Naive thymus-derived CD4-positive, alpha-beta T cell (primary cell): ENCODE measurements at regions of chr7 and their contacts with region 1.

Region 1: GRCh38 chr7:131107337-131108211 is 220.1 kb upstream of the MKLN1 start:
- DNase-seq: peak; percentile 53 to 90 (median 84)
- ATAC-seq: peak; percentile 38
- H3K4me3 ChIP-seq: peak overlapping the region; percentile 98
- H3K4me3 Mint-ChIP-seq: peak overlapping the region; percentile 86 to 100 (median 97)
- H3K27ac ChIP-seq: peak overlapping the region; percentile 98
- H3K27ac Mint-ChIP-seq: peak overlapping the region; percentile 95 to 100 (median 98)
- H3K4me1 ChIP-seq: peaks cover 42 to 46% of the 10 kb centered on the region in 2 donors
- H3K4me1 Mint-ChIP-seq: peaks cover 48 to 69% (median 58%) of the 10 kb centered on the region in 7 donors
- H3K27me3 ChIP-seq: no peaks in the 10 kb centered on the region
- H3K27me3 Mint-ChIP-seq: peaks cover 0 to 5% (median 0%) of the 10 kb centered on the region in 5 donors

Region 2: DNA sequence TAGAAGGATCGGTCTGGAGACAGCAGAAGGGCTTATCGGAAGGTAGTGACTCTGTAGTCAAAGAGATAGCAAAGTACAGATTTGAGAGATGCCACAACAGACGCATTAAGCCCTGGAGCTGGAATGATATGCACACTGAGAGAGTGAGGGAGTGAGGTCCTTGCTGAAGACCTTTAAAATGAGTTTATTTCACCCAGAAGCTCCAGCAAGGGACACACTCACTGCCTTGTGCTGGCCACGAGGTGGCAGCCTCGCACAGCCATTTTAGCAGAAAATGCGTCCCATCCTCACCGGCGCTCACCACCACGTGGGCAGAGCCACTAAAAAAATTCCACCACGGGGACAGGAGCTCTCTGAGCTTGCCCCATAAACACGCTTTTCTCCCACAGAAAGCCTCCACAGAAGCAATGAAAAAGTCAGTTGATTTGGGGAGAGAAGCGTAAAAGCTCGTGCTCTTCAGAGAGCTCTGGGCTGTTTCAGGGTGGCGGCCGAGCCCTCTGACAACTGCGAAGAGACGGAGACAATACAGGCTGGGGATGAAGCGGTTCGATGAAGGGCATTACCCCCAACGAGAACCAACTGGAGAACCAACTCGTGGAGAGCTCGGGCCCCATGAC is 210.6 kb before region 1 on chr7:
- CTCF ChIA-PET with region 1: interaction called, 3 read pairs
- POLR2A ChIA-PET with region 1: no interaction called
- intact Hi-C with region 1: loop called in 1 of 2 experiments (anchors 2 kb)
- DNase-seq: peak; percentile 60 to 76 (median 69)
- ATAC-seq: peak; percentile 84
- H3K4me3 ChIP-seq: no peak overlapping the region
- H3K4me3 Mint-ChIP-seq: peak overlapping the region in 7 of 10 donors; percentile 16 to 67 (median 37)
- H3K27ac ChIP-seq: no peak overlapping the region
- H3K27ac Mint-ChIP-seq: peak overlapping the region; percentile 61 to 92 (median 84)
- H3K4me1 ChIP-seq: peaks cover 16 to 35% of the 10 kb centered on the region in 2 donors
- H3K4me1 Mint-ChIP-seq: peaks cover 49 to 86% (median 83%) of the 10 kb centered on the region in 7 donors
- H3K27me3 ChIP-seq: no peaks in the 10 kb centered on the region
- H3K27me3 Mint-ChIP-seq: no peaks in the 10 kb centered on the region

Region 3: DNA sequence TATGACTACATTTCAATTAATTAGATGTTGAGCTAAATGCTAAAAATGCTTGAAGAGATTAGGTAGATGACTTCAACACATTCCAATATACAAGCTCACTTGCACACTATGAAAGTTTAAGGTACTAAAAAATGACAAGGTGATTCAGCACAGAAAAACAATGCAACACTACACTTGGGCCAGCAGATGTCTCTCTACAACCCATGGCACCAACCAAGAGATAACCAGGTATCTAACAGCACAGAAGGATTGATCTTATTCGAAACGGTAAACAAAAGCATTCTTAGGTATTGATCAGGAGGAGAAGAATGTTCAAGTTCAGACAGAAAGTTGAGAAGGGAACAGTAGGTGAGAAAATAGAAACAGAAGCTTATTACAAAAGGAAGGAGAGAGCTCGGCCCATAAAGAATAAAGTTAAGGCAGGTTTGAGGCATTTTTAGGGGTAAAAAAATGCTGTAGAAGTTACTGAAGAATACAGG is 125.4 kb before region 1 on chr7:
- CTCF ChIA-PET with region 1: no interaction called
- POLR2A ChIA-PET with region 1: interaction called, 4 read pairs
- intact Hi-C with region 1: loop called in 1 of 2 experiments (anchors 2 kb)
- DNase-seq: peak in 7 of 9 donors; percentile 33 to 62 (median 56)
- ATAC-seq: peak; percentile 88
- H3K4me3 ChIP-seq: peak overlapping the region; percentile 9
- H3K4me3 Mint-ChIP-seq: no peak overlapping the region
- H3K27ac ChIP-seq: peak overlapping the region; percentile 65
- H3K27ac Mint-ChIP-seq: no peak overlapping the region
- H3K4me1 ChIP-seq: peaks cover 45 to 61% of the 10 kb centered on the region in 2 donors
- H3K4me1 Mint-ChIP-seq: peaks cover 7 to 39% (median 11%) of the 10 kb centered on the region in 7 donors
- H3K27me3 ChIP-seq: no peaks in the 10 kb centered on the region
- H3K27me3 Mint-ChIP-seq: no peaks in the 10 kb centered on the region

Region 4: GRCh38 chr7:131071786-131072504 is 35.6 kb before region 1 on chr7:
- CTCF ChIA-PET with region 1: interaction called, 4 read pairs
- POLR2A ChIA-PET with region 1: interaction called, 4 read pairs
- intact Hi-C with region 1: loop called (anchors 1 kb)
- DNase-seq: no peak
- ATAC-seq: no peak
- H3K4me3 ChIP-seq: no peak overlapping the region
- H3K4me3 Mint-ChIP-seq: peak overlapping the region in 5 of 10 donors; percentile 14 to 54 (median 45)
- H3K27ac ChIP-seq: no peak overlapping the region
- H3K27ac Mint-ChIP-seq: peak overlapping the region in 7 of 9 donors; percentile 39 to 67 (median 52)
- H3K4me1 ChIP-seq: peaks cover 39 to 69% of the 10 kb centered on the region in 2 donors
- H3K4me1 Mint-ChIP-seq: peaks cover 33 to 72% (median 55%) of the 10 kb centered on the region in 7 donors
- H3K27me3 ChIP-seq: no peaks in the 10 kb centered on the region
- H3K27me3 Mint-ChIP-seq: no peaks in the 10 kb centered on the region

Region 5: GRCh38 chr7:131145026-131145425 is 37.5 kb after region 1 on chr7:
- CTCF ChIA-PET with region 1: no interaction called
- POLR2A ChIA-PET with region 1: no interaction called
- intact Hi-C with region 1: loop called in 1 of 2 experiments (anchors 5 kb)
- DNase-seq: no peak
- ATAC-seq: no peak
- H3K4me3 ChIP-seq: no peak overlapping the region
- H3K4me3 Mint-ChIP-seq: no peak overlapping the region
- H3K27ac ChIP-seq: no peak overlapping the region
- H3K27ac Mint-ChIP-seq: no peak overlapping the region
- H3K4me1 ChIP-seq: no peaks in the 10 kb centered on the region
- H3K4me1 Mint-ChIP-seq: peaks cover 0 to 3% (median 0%) of the 10 kb centered on the region in 7 donors
- H3K27me3 ChIP-seq: no peaks in the 10 kb centered on the region
- H3K27me3 Mint-ChIP-seq: peaks cover 0 to 13% (median 0%) of the 10 kb centered on the region in 5 donors

Region 6: GRCh38 chr7:131302876-131303707 is 195.5 kb after region 1 on chr7:
- CTCF ChIA-PET with region 1: interaction called, 3 read pairs
- POLR2A ChIA-PET with region 1: interaction called, 3 read pairs
- intact Hi-C with region 1: loop called in 1 of 2 experiments (anchors 1 kb)
- DNase-seq: peak in 6 of 9 donors; percentile 16 to 34 (median 24)
- ATAC-seq: peak; percentile 45
- H3K4me3 ChIP-seq: no peak overlapping the region
- H3K4me3 Mint-ChIP-seq: no peak overlapping the region
- H3K27ac ChIP-seq: no peak overlapping the region
- H3K27ac Mint-ChIP-seq: peak overlapping the region in 1 of 9 donors; percentile 68
- H3K4me1 ChIP-seq: no peaks in the 10 kb centered on the region
- H3K4me1 Mint-ChIP-seq: no peaks in the 10 kb centered on the region
- H3K27me3 ChIP-seq: no peaks in the 10 kb centered on the region
- H3K27me3 Mint-ChIP-seq: peaks cover 0 to 4% (median 0%) of the 10 kb centered on the region in 5 donors